ENCODE measurements at regions of chr15 and their contacts with region 1.

Region 1: GRCh38 chr15:41180206-41180789 is 50.3 kb downstream of the EXD1 start:
- DNase-seq: no peak
- ATAC-seq: no peak
- H3K4me3 ChIP-seq: no peak overlapping the region
- H3K4me1 ChIP-seq: no peaks in the 10 kb centered on the region
- CTCF ChIP-seq: no peak

Region 2: DNA sequence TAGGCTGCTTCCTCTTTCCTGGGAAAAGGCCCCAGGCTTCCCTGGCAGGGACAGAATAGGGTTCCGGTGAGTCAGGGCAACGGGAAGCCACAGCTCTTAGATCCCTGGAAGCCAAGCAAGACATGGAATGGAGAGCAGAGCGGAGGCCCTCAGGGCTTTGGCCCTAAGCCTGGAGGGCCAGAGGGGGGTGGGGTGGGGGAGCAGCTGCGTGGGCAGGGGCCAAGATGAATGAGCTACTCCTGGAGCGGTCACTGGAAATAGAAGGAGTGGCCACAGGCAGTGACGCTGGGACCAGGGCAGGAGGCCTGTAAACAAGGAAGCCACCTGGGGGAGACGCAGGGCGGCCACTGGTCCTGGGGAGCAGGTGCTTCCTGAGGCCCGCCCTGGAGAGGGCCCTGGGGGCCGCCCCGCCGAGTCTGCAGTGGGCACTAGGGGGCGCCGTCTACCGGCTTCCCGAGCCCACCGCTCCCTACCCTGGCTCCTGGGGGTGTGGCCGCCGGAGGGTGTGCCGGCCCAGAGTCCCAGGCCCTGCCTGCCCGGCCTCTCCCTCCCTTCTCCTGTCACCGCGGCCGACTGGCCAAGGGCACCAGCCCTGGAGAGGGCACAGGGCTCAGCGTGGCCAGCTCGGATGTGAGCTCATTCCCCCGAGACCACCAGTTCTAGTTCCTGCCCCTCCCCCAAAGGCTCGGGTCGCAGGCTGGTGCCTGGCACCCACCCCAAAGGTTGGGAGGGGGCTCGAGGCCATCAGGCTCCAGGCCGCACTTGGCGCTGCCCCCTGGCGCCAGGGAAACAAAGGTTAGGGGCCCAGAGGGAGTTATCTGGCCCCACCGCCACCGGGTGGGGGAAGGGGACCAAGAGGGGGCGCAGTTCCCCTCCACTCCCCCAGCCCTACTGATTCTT is 274.0 kb before region 1 on chr15:
- intact Hi-C with region 1: loop called (anchors 10 kb)
- DNase-seq: peak; percentile 96 to 98 (median 96)
- ATAC-seq: peak; percentile 88
- H3K4me3 ChIP-seq: no peak overlapping the region
- H3K4me1 ChIP-seq: peaks cover 36% of the 10 kb centered on the region
- CTCF ChIP-seq: peak; percentile 95

Region 3: GRCh38 chr15:41104234-41104633 is 76.1 kb before region 1 on chr15:
- intact Hi-C with region 1: no loop called
- DNase-seq: no peak
- ATAC-seq: no peak
- H3K4me3 ChIP-seq: no peak overlapping the region
- H3K4me1 ChIP-seq: no peaks in the 10 kb centered on the region
- CTCF ChIP-seq: no peak

Region 4: GRCh38 chr15:41230345-41230649 is 50.0 kb after region 1 on chr15:
- intact Hi-C with region 1: no loop called
- DNase-seq: no peak
- ATAC-seq: no peak
- H3K4me3 ChIP-seq: no peak overlapping the region
- H3K4me1 ChIP-seq: peaks cover 15% of the 10 kb centered on the region
- CTCF ChIP-seq: no peak

Region 5: GRCh38 chr15:41347236-41347635 is 166.9 kb after region 1 on chr15:
- intact Hi-C with region 1: no loop called
- DNase-seq: no peak
- ATAC-seq: no peak
- H3K4me3 ChIP-seq: no peak overlapping the region
- H3K4me1 ChIP-seq: no peaks in the 10 kb centered on the region
- CTCF ChIP-seq: no peak

Region 6: GRCh38 chr15:41546846-41547786 is 366.8 kb after region 1 on chr15:
- intact Hi-C with region 1: no loop called
- DNase-seq: no peak
- ATAC-seq: no peak
- H3K4me3 ChIP-seq: no peak overlapping the region
- H3K4me1 ChIP-seq: peaks cover 11% of the 10 kb centered on the region
- CTCF ChIP-seq: no peak

Measured in mucosa of descending colon (tissue), 3 donors.